CD14-positive monocyte (primary cell): ENCODE measurements at regions of chr5 and their contacts with region 1.

Region 1: DNA sequence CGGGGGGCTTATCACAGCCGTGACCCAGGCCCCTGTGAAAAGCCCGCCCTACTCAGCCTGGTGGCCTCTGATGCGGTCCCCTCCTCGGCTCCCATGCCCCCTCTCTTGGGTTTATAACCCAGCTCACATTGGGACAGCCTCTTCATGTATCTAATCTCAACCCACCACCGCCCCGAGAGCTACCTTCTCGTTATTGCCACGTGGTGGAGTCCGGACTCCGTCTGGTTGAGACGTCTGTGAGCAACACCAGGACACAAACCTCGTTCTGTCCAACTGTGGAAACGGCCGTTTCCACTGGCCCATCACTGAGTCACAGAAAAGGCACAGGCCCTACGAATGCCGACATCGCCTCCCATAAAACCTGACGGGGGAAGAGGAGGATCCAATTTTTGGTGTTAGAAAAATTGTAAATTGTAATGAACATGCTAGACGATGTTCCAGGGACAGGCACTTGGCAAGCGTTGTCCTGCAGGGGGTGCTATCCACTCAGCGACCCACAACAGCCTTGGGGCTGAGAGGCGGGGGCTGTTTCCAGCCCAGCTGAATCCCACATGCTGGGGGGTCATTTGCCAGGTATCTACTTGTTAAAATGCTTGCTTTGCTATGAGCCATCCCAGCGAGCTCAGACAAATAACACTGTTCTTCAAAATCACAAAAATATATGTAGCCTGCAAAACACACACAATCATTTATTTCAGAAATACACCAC is 37.3 kb upstream of the N4BP3 start:
- DNase-seq: peak; percentile 25 to 57 (median 52)
- H3K4me3 ChIP-seq: no peak overlapping the region
- H3K4me3 Mint-ChIP-seq: no peak overlapping the region
- H3K27ac ChIP-seq: no peak overlapping the region
- H3K27ac Mint-ChIP-seq: no peak overlapping the region
- H3K4me1 ChIP-seq: no peaks in the 10 kb centered on the region
- H3K4me1 Mint-ChIP-seq: peaks cover 3% of the 10 kb centered on the region
- H3K27me3 ChIP-seq: peaks cover 0 to 7% of the 10 kb centered on the region in 2 donors
- H3K27me3 Mint-ChIP-seq: peaks cover 9 to 13% (median 11%) of the 10 kb centered on the region in 3 donors
- CTCF ChIP-seq: peak; percentile 90

Region 2: GRCh38 chr5:177982072-177982727 is 93.8 kb before region 1 on chr5:
- intact Hi-C with region 1: no loop called
- DNase-seq: no peak
- H3K4me3 ChIP-seq: no peak overlapping the region
- H3K4me3 Mint-ChIP-seq: no peak overlapping the region
- H3K27ac ChIP-seq: no peak overlapping the region
- H3K27ac Mint-ChIP-seq: no peak overlapping the region
- H3K4me1 ChIP-seq: no peaks in the 10 kb centered on the region
- H3K4me1 Mint-ChIP-seq: no peaks in the 10 kb centered on the region
- H3K27me3 ChIP-seq: peaks cover 13 to 53% of the 10 kb centered on the region in 2 donors
- H3K27me3 Mint-ChIP-seq: peaks cover 48 to 65% (median 63%) of the 10 kb centered on the region in 3 donors
- CTCF ChIP-seq: no peak

Region 3: DNA sequence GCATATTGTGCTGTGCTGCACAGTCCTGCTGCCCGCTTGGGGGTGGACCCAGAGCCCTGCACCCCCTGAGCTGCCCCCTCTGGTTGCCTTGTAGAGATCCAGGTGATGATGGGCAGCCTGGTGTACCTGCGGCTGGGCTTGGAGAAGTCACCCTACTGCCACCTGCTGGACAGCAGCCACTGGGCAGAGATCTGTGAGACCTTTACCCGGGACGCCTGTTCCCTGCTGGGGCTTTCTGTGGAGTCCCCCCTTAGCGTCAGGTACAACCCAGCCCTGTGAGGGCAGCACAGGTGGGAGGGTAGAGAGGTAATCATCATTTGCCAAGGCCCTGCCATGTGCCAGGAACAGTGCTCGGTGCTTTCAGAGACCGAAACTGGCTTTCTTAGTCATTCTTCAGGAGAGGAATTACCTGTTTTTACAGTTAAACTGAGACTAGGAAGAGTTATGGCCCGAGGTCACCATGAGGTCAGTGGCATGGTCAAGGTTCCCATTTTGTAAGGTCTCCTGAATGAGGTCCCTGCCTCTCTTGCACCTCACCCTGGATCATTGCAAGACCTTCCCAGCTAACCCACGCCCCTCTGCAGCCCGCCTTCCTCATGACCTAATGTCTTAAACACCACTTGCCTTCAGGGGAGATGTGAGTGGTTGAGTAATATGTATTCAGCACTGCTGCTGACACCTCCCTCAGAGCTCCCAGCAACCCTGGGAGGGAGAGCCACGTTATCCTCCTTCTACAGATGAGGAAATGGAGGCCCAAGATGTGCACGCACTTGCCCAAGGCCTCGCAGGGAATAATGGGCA is 70.2 kb after region 1 on chr5:
- intact Hi-C with region 1: loop called in 1 of 2 experiments (anchors 5 kb)
- DNase-seq: peak in 2 of 3 donors; percentile 24 to 30
- H3K4me3 ChIP-seq: no peak overlapping the region
- H3K4me3 Mint-ChIP-seq: no peak overlapping the region
- H3K27ac ChIP-seq: no peak overlapping the region
- H3K27ac Mint-ChIP-seq: peak overlapping the region in 2 of 7 donors; percentile 21 to 30
- H3K4me1 ChIP-seq: no peaks in the 10 kb centered on the region
- H3K4me1 Mint-ChIP-seq: no peaks in the 10 kb centered on the region
- H3K27me3 ChIP-seq: no peaks in the 10 kb centered on the region
- H3K27me3 Mint-ChIP-seq: no peaks in the 10 kb centered on the region
- CTCF ChIP-seq: peak; percentile 75

Region 4: DNA sequence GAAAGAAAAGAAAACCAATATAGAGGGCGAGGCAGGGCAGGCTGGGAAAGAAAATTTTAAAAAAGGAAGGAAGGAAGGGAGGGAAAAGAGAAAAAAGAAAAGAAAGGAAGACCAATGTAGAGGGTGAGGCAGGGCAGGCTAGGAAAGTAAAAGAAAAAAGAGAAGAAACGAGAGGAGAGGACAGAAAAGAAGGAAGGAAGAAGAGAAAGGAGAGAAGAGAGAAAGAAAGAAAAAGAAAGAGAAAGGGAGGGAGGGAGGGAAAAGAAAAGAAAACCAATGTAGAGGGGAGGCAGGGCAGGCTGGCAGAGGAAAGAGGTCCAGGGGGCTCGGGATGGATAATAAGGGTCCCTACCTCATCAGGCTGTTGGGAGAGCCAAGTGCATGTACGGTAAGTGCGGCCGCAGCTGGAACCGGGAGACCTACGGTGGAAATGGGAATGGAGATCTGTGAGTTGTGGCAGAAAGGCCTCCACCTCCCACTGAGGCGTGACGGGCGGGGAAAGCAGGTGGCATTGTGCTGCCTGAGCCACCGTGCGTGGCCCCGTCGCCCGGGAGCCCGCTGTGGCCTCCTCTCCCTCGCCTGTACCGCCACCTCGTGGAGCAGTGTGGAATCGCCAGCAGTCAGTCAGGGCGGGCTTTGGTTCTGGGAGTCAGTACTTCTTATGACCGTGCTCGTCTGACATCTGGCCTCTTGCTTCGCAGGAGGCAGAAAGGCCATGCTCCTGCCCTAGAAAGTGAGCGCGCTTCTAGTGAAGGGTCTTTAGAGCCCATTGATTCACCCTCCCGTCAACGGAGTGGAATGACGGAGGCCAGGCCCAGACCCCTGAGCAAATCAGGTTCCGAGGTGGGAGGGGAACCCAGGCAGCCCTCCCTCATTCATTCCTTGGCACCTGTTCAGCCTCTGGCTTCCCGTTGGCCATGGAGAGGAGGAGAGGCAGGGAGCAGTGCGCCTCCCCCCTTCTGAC is 88.1 kb after region 1 on chr5:
- intact Hi-C with region 1: loop called (anchors 1 to 2 kb)
- DNase-seq: peak; percentile 74 to 75 (median 74)
- H3K4me3 ChIP-seq: peak overlapping the region in 1 of 3 experiments; percentile 53
- H3K4me3 Mint-ChIP-seq: peak overlapping the region in 1 of 2 donors; percentile 76
- H3K27ac ChIP-seq: no peak overlapping the region
- H3K27ac Mint-ChIP-seq: peak overlapping the region in 1 of 7 donors; percentile 63
- H3K4me1 ChIP-seq: peaks cover 8 to 9% of the 10 kb centered on the region in 2 donors
- H3K4me1 Mint-ChIP-seq: peaks cover 10% of the 10 kb centered on the region
- H3K27me3 ChIP-seq: peaks cover 0 to 6% of the 10 kb centered on the region in 2 donors
- H3K27me3 Mint-ChIP-seq: peaks cover 11 to 28% (median 20%) of the 10 kb centered on the region in 3 donors
- CTCF ChIP-seq: peak; percentile 88

Region 5: GRCh38 chr5:178476972-178477754 is 401.2 kb after region 1 on chr5:
- intact Hi-C with region 1: no loop called
- DNase-seq: peak; percentile 54 to 92 (median 85)
- H3K4me3 ChIP-seq: peak overlapping the region in 2 of 3 experiments; percentile 14 to 61
- H3K4me3 Mint-ChIP-seq: peak overlapping the region; percentile 68 to 71
- H3K27ac ChIP-seq: peak overlapping the region; percentile 60 to 86
- H3K27ac Mint-ChIP-seq: peak overlapping the region; percentile 76 to 95 (median 88)
- H3K4me1 ChIP-seq: peaks cover 57 to 61% of the 10 kb centered on the region in 2 donors
- H3K4me1 Mint-ChIP-seq: peaks cover 59% of the 10 kb centered on the region
- H3K27me3 ChIP-seq: no peaks in the 10 kb centered on the region
- H3K27me3 Mint-ChIP-seq: peaks cover 0 to 5% (median 1%) of the 10 kb centered on the region in 3 donors
- CTCF ChIP-seq: no peak